Kidney (tissue), 22 donors: ENCODE measurements at regions of chr19 and their contacts with region 1.

Region 1: DNA sequence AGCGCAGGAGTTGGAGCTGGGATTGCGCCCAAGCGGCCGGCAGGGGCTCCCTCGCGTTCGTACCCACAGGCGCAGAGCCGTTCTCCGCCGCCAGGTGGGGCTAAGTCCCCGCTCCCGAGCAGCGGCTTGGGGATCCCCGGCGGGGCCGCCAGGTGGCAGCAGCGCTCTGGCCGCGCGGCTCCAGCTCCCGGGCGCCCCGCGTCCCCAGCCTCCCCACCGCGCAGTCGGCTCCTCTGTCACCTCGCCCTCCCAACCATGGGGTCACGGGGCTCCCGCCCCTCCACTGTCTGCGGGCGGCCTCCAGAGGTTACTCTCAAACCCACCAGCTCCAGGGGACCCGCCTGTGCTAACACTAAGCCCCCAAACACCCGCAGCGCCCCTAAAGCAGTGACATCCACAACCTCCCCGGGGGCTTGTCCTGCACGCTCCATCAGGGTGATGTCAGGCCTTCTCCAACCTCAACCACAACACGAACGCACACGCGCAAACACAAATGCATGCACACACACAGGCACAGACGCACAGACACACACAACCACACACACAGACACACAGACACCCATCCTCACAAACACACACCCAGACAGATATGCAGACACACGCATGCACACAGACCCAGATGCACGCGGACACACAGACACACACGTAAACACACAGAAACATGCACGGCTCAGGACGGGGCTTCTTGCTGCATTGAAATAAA is 18.4 kb upstream of the KCTD15 start:
- DNase-seq: peak; percentile 78 to 93 (median 86)
- H3K4me3 ChIP-seq: no peak overlapping the region
- H3K27ac ChIP-seq: no peak overlapping the region
- H3K4me1 ChIP-seq: peaks cover 0 to 10% (median 0%) of the 10 kb centered on the region in 3 donors
- H3K27me3 ChIP-seq: no peaks in the 10 kb centered on the region
- CTCF ChIP-seq: peak; percentile 100

Region 2: DNA sequence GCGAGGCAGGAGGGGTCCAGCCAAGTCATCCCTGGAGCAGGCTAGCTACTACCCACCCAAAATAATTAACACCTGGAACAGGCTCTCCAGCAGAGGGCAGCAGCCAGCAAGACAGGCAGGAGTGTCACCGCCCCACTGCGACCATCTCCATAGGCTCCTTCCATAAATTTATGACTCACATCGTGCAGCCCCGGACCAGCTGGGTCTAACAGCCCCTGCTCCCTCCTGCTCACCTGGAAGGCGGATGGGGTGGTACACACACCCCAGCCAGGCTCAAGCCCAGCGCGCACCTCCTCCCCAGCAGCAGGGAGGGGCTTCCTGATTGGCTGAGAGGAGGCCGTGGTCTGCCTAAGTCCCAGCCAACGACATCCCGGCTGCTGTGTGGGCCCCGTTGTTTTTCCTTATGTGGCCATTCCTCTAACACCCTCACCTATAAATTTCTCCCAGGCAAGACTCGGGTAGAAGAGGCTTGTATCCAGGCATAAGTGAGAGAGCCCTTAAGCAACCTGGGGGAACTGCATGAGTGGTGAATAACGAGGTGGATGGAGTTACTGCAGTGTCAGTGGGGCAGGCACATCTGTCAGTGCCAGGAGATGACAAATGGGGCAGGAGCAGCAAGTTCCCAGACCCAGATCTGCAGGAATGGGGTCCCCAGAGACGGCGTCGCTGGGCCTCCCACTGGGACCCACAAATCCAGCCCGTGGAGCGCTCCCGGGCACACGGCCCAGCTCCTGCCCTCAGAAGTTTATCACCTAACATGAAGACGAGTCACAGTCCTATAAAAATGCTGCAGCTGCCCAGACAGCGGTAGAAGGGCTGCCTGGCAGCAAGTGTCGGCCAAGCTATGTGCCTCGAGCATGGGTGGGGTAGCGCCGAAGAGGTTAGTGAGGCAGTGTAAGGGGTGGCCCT is 361.7 kb before region 1 on chr19:
- intact Hi-C with region 1: loop called (anchors 10 kb)
- DNase-seq: peak; percentile 42 to 85 (median 78)
- H3K4me3 ChIP-seq: no peak overlapping the region
- H3K27ac ChIP-seq: no peak overlapping the region
- H3K4me1 ChIP-seq: no peaks in the 10 kb centered on the region
- H3K27me3 ChIP-seq: no peaks in the 10 kb centered on the region
- CTCF ChIP-seq: peak; percentile 48

Region 3: DNA sequence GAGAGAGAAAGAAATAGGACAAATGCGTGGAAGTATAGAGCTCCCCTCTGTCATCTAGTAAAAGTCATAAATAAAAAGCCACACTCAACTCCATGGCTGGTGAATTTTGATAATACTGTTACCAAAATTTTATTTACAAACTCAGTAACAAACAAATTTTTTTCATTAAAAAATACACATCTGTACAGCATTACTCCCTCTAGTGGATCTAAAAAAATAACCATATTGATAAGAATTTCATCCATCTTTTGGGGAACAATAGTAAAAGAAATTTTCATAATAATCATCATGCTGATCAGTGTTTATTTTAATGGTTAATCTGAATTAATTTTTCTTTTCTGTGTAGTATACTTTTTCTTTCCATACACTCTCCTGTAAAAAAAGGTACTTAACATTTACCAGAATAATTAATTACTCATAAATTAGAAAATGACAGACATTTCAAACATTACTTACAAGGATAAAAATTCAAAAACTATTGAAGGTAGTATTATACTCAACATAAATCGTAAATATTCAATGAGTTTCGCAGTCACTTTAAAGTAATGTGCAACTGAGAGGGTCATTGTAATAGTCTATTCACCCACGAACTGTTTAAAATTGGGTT is 220.6 kb after region 1 on chr19:
- intact Hi-C with region 1: loop called (anchors 10 kb)
- DNase-seq: peak in 1 of 5 donors; percentile 9
- H3K4me3 ChIP-seq: no peak overlapping the region
- H3K27ac ChIP-seq: no peak overlapping the region
- H3K4me1 ChIP-seq: no peaks in the 10 kb centered on the region
- H3K27me3 ChIP-seq: no peaks in the 10 kb centered on the region
- CTCF ChIP-seq: no peak

Region 4: DNA sequence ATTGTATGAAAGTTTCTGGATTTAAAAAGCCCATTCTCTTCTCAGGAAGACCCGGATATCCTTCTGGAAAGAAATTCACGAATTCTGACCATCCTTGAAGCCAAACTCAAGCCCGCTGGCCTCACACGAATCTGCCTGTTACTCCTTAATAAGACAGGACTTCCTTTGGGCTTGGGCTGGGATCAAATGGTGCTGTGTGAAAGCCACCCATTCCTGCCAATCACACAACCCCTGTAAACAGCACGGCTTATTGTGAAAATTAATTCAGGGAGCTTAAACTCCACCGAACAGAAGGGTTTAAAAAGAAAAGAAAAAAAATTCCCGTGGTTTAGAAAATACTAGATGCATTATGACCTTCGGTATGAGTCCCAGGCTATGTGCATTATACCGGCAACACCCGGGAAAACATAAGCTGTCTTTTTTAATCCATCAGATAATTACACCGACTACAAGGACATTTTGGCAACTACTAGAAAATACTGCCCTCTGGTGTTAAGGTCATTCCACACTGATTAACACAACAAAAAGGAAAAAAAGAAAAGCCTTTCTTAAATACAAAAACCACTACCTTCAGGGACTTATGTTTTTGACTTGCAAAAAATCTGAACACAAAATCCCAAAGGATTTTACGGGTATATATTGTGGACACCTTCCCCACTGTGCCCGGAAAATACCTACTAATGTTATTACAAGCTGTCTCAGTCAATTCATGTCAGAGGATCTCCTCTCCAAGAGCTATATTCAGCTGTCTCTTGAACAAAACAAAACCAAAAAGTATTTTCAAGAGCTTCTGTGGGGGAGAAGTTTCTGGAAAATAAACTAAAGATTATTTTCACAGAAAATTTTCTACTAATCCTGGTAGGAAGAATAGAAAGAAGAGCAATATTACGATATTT is 318.0 kb after region 1 on chr19:
- intact Hi-C with region 1: loop called (anchors 10 kb)
- DNase-seq: peak in 2 of 5 donors; percentile 82 to 85
- H3K4me3 ChIP-seq: no peak overlapping the region
- H3K27ac ChIP-seq: no peak overlapping the region
- H3K4me1 ChIP-seq: no peaks in the 10 kb centered on the region
- H3K27me3 ChIP-seq: no peaks in the 10 kb centered on the region
- CTCF ChIP-seq: peak; percentile 38